CD8-positive, alpha-beta T cell (primary cell): ENCODE measurements at regions of chr4 and their contacts with region 1.

Region 1: GRCh38 chr4:77433418-77433733 is 172.2 kb upstream of the CXCL13 start:
- DNase-seq: peak in 3 of 9 experiments; percentile 4 to 64 (median 52)
- ATAC-seq: peak; percentile 66
- H3K4me3 ChIP-seq: no peak overlapping the region
- H3K4me3 Mint-ChIP-seq: no peak overlapping the region
- H3K27ac ChIP-seq: no peak overlapping the region
- H3K27ac Mint-ChIP-seq: no peak overlapping the region
- H3K4me1 ChIP-seq: no peaks in the 10 kb centered on the region
- H3K4me1 Mint-ChIP-seq: peaks cover 5% of the 10 kb centered on the region
- H3K27me3 ChIP-seq: no peaks in the 10 kb centered on the region
- H3K27me3 Mint-ChIP-seq: no peaks in the 10 kb centered on the region
- CTCF ChIP-seq: peak; percentile 37

Region 2: DNA sequence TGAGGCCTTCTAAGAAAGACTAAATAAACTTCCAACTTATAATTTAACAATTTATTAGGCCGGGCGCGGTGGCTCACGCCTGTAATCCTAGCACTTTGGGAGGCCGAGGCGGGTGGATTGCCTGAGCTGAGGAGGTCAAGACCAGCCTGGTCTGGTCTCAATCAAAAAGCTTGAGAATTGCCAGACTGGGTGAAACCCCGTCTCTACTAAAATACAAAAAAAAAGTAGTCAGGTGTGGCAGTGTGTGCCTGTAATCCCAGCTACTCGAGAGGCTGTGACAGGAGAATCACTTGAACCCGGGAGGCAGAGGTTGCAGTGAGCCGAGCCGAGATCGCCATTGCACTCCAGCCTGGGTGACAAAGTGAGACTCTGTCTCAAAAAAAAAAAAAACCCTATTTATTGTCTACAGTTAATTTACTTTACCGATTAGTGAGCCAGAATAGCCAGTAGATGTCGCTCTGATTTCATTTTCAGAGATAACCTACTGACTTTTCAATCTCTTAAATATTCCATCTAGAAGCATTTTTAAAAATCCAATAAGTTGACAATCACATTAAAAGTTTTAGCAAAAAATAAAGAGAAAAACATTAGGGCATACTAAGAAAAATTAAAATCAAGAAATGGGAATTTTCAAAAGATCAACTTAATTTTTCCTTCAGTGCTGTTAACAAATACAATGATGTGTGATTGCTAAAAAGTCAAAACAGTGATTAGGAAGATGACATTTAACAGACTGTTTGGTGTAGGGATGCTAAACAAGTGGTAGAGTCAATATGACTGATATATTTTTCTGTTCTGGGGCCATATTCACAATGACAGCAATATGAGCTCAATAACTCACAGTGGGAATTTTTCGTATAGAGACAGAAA is 1002.6 kb before region 1 on chr4:
- CTCF ChIA-PET with region 1: no interaction called
- POLR2A ChIA-PET with region 1: no interaction called
- intact Hi-C with region 1: loop called in 1 of 2 experiments (anchors 10 kb)
- DNase-seq: peak in 2 of 9 experiments; percentile 52 to 61
- ATAC-seq: no peak
- H3K4me3 ChIP-seq: no peak overlapping the region
- H3K4me3 Mint-ChIP-seq: no peak overlapping the region
- H3K27ac ChIP-seq: no peak overlapping the region
- H3K27ac Mint-ChIP-seq: no peak overlapping the region
- H3K4me1 ChIP-seq: no peaks in the 10 kb centered on the region
- H3K4me1 Mint-ChIP-seq: no peaks in the 10 kb centered on the region
- H3K27me3 ChIP-seq: no peaks in the 10 kb centered on the region
- H3K27me3 Mint-ChIP-seq: peaks cover under 1% of the 10 kb centered on the region
- CTCF ChIP-seq: peak; percentile 67

Region 3: GRCh38 chr4:77240469-77241066 is 192.8 kb before region 1 on chr4:
- CTCF ChIA-PET with region 1: no interaction called
- POLR2A ChIA-PET with region 1: no interaction called
- intact Hi-C with region 1: loop called (anchors 2 to 10 kb)
- DNase-seq: peak; percentile 7 to 63 (median 43)
- ATAC-seq: no peak
- H3K4me3 ChIP-seq: no peak overlapping the region
- H3K4me3 Mint-ChIP-seq: no peak overlapping the region
- H3K27ac ChIP-seq: no peak overlapping the region
- H3K27ac Mint-ChIP-seq: no peak overlapping the region
- H3K4me1 ChIP-seq: no peaks in the 10 kb centered on the region
- H3K4me1 Mint-ChIP-seq: no peaks in the 10 kb centered on the region
- H3K27me3 ChIP-seq: no peaks in the 10 kb centered on the region
- H3K27me3 Mint-ChIP-seq: peaks cover 5% of the 10 kb centered on the region
- CTCF ChIP-seq: peak; percentile 21

Region 4: DNA sequence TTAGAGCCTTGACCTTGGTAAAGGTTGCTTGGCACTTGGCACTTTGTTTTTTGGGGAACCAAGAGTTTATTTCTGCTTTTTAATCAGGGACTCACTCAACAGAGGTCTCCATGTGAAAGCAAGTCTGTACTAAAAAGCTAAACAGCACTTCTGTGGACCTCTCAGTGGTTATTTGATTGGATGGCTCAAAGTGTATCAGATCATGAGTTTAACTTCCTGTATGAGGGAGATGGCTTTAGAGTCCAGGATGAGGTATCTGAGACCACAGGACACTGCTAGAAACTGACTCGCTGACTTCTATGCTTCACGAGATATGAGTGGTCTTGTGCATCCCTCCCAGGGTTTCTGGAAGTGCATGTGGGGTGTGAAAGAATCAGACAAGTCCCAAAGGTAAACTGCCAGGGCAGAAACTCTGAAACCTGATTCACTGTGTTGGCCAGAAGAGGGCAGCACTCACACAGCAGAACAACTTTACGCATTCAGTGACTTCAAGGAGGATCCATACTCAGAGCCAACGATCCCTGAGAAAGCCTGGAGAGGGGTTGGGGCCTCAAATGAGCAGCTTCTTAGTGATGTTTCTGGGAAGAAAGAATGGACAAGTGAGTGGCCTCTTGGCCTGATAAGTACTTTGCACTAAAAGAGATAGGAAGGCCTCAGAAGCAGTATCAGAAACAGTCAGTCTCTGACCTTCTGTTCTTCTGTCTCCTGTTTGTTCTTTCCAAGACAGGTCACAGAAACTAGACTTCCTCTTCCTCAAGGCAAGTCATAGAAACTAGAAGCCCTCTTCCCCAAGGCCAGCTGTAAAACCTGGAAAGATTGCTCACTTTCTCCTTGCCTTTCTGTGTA is 48.0 kb before region 1 on chr4:
- CTCF ChIA-PET with region 1: interaction called, 6 read pairs
- POLR2A ChIA-PET with region 1: no interaction called
- intact Hi-C with region 1: loop called (anchors 2 kb)
- DNase-seq: peak; percentile 7 to 68 (median 41)
- ATAC-seq: peak; percentile 29
- H3K4me3 ChIP-seq: no peak overlapping the region
- H3K4me3 Mint-ChIP-seq: no peak overlapping the region
- H3K27ac ChIP-seq: no peak overlapping the region
- H3K27ac Mint-ChIP-seq: no peak overlapping the region
- H3K4me1 ChIP-seq: no peaks in the 10 kb centered on the region
- H3K4me1 Mint-ChIP-seq: no peaks in the 10 kb centered on the region
- H3K27me3 ChIP-seq: no peaks in the 10 kb centered on the region
- H3K27me3 Mint-ChIP-seq: no peaks in the 10 kb centered on the region
- CTCF ChIP-seq: peak; percentile 64